Endothelial cell of umbilical vein (primary cell): ENCODE measurements at regions of chr3 and their contacts with region 1.

Region 1: DNA sequence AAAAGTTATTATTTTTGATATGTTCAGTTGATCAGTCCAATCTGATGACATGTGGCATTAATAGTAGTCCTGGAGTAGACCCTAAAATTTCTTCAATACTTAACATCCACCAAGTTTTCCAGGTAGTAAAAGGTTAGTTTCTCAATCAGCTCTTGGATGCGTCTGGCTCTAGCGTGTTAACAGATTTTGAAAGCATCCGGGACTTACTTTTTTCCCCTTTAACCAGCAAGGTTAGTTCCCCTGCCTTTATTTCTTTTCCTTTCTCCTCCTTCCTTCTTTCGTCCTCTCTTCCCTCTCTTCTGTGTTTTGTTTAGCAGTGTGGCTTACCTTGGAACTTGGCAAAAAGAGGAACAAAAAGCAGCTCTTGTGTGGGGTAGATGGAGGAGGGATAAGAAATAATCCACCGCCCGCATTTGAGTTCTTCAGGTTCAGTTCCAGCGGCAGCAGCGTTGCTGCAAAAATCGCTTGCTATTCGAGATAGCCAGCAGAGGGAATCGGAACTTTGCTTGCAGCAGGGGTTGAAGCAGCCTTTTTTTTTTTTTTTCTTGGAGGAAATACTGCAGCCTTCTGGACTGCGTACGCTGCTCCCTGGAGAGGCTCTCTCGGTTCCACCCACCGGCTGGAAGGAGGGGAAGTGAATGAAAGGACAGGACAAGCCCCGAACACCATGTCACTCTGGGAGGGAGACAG is at the start of gene RBMS3:
- DNase-seq: peak; percentile 95
- H3K4me3 ChIP-seq: peak within 1 kb of the TSS; percentile 58 to 94 (median 77)
- H3K27ac ChIP-seq: peak within 1 kb of the TSS; percentile 97
- H3K4me1 ChIP-seq: peaks cover 31% of the 10 kb centered on the region
- H3K27me3 ChIP-seq: no peaks in the 10 kb centered on the region
- CTCF ChIP-seq: peak; percentile 35 to 66
- POLR2A ChIP-seq: no peak
- total RNA-seq, gene RBMS3: 37.3 and 42.3 TPM in 2 replicates

Region 2: DNA sequence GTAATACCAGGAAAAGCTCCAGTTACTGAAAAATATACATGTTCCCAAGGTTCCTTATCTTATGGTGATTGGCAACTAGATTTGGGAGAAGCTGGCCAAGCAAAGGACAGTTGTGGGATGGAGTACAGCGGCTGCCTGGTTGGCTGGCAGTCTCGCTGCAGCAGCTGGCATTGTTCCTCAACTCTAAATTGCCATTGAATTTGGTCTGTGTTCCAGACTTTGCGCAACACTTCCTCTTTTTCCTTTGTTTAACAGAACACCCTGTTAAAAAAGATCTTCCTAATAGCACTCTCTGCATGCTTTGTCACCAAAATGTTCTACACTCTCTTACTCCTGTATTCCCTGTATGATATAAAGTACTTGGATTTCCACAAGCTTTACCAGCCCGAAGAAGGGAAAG is 420.2 kb before region 1 on chr3:
- CTCF ChIA-PET with region 1: no interaction called
- POLR2A ChIA-PET with region 1: no interaction called
- dilution Hi-C with region 1: no loop called
- intact Hi-C with region 1: no loop called
- DNase-seq: no peak
- H3K4me3 ChIP-seq: no peak overlapping the region
- H3K27ac ChIP-seq: no peak overlapping the region
- H3K4me1 ChIP-seq: no peaks in the 10 kb centered on the region
- H3K27me3 ChIP-seq: peaks cover 0 to 4% of the 10 kb centered on the region in 2 experiments
- CTCF ChIP-seq: no peak
- POLR2A ChIP-seq: no peak

Region 3: GRCh38 chr3:29128001-29128400 is 152.5 kb before region 1 on chr3:
- CTCF ChIA-PET with region 1: interaction called, 6 read pairs
- POLR2A ChIA-PET with region 1: no interaction called
- dilution Hi-C with region 1: no loop called
- intact Hi-C with region 1: loop called (anchors 1 kb)
- DNase-seq: peak; percentile 90
- H3K4me3 ChIP-seq: no peak overlapping the region
- H3K27ac ChIP-seq: peak overlapping the region; percentile 47
- H3K4me1 ChIP-seq: peaks cover 15% of the 10 kb centered on the region
- H3K27me3 ChIP-seq: no peaks in the 10 kb centered on the region
- CTCF ChIP-seq: no peak
- POLR2A ChIP-seq: no peak

Region 4: GRCh38 chr3:29202378-29202777 is 78.2 kb before region 1 on chr3:
- CTCF ChIA-PET with region 1: no interaction called
- POLR2A ChIA-PET with region 1: no interaction called
- dilution Hi-C with region 1: no loop called
- intact Hi-C with region 1: loop called (anchors 5 kb)
- DNase-seq: peak; percentile 59
- H3K4me3 ChIP-seq: no peak overlapping the region
- H3K27ac ChIP-seq: peak overlapping the region; percentile 37
- H3K4me1 ChIP-seq: peaks cover 17% of the 10 kb centered on the region
- H3K27me3 ChIP-seq: no peaks in the 10 kb centered on the region
- CTCF ChIP-seq: no peak
- POLR2A ChIP-seq: no peak

Region 5: DNA sequence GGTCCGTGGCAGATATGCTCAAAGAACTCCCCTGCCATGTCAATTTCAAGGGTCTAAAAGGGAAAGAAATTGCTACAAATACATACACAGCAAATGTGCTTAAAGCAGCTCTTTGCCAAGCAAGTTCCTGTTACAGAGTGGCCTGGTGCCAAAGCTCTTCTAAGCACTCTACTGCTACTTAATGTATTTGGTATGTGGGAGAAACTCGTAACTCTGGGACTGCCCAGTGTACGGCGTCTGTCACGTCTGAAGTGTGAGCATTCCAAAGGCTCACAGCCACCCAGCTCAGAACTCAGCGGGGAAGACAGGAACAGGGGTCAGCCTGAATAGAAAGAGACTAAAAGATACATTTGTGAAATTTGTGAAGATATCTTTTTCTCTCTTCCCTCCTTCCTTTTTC is 54.9 kb after region 1 on chr3:
- CTCF ChIA-PET with region 1: interaction called, 9 read pairs
- POLR2A ChIA-PET with region 1: no interaction called
- dilution Hi-C with region 1: no loop called
- intact Hi-C with region 1: loop called (anchors 1 kb)
- DNase-seq: peak; percentile 92
- H3K4me3 ChIP-seq: peak overlapping the region in 2 of 3 experiments; percentile 19 to 42
- H3K27ac ChIP-seq: peak overlapping the region; percentile 76
- H3K4me1 ChIP-seq: peaks cover 40% of the 10 kb centered on the region
- H3K27me3 ChIP-seq: no peaks in the 10 kb centered on the region
- CTCF ChIP-seq: no peak
- POLR2A ChIP-seq: no peak

Region 6: DNA sequence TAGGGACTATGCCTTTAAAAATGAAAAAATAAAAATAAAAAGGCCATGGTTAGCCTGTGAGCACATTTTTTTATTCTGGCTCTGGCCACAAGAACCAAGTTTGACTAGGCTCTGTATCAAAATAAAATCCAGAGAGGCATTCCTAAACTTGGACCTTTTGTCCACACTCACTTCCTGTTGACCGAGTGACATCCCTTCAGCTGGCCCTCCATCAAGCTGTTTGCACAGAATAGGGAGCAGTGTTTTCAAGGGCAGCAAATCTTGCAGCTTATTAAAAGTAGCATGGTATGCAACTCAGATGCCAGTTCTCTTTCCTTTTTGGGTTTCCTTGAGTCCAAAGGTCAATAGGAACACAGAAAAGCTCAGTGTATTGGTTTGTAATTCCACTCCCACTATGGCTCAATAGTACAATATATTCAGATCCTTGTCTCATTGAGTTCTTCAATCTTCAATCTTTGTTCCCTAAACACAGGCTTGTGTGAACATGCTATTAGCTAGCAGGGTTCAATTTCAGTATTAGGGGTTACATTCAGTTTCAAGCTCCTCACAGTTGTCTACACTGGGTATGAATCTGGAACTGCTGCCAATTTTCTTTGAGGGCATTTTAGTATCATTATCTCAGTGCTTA is 244.8 kb after region 1 on chr3:
- CTCF ChIA-PET with region 1: no interaction called
- POLR2A ChIA-PET with region 1: interaction called, 5 read pairs
- dilution Hi-C with region 1: no loop called
- intact Hi-C with region 1: loop called (anchors 1 kb)
- DNase-seq: peak; percentile 93
- H3K4me3 ChIP-seq: no peak overlapping the region
- H3K27ac ChIP-seq: peak overlapping the region; percentile 64
- H3K4me1 ChIP-seq: peaks cover 25% of the 10 kb centered on the region
- H3K27me3 ChIP-seq: no peaks in the 10 kb centered on the region
- CTCF ChIP-seq: no peak
- POLR2A ChIP-seq: peak; percentile 48

Region 7: DNA sequence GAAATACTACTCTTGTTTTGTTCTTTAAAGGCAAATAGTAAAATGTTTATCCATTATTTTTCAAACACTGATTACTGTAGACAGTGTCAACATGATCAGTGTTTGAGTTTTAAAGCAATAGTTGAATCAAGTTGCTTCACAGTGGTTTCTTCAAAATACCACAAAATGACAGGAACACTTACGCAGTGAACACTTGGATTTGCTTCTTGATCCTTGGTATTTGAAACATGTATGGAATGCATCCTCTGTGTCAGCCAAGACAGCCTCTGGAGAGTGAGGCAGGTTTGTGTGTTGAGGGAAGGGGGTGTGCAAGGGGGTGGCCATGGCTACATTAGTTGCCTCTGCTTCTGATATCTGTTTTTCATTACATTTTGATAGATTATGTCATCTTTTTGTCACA is 413.3 kb after region 1 on chr3:
- CTCF ChIA-PET with region 1: interaction called, 3 read pairs
- POLR2A ChIA-PET with region 1: no interaction called
- dilution Hi-C with region 1: no loop called
- intact Hi-C with region 1: loop called (anchors 1 kb)
- DNase-seq: peak; percentile 78
- H3K4me3 ChIP-seq: no peak overlapping the region
- H3K27ac ChIP-seq: peak overlapping the region; percentile 98
- H3K4me1 ChIP-seq: peaks cover 34% of the 10 kb centered on the region
- H3K27me3 ChIP-seq: no peaks in the 10 kb centered on the region
- CTCF ChIP-seq: no peak
- POLR2A ChIP-seq: no peak

Region 8: DNA sequence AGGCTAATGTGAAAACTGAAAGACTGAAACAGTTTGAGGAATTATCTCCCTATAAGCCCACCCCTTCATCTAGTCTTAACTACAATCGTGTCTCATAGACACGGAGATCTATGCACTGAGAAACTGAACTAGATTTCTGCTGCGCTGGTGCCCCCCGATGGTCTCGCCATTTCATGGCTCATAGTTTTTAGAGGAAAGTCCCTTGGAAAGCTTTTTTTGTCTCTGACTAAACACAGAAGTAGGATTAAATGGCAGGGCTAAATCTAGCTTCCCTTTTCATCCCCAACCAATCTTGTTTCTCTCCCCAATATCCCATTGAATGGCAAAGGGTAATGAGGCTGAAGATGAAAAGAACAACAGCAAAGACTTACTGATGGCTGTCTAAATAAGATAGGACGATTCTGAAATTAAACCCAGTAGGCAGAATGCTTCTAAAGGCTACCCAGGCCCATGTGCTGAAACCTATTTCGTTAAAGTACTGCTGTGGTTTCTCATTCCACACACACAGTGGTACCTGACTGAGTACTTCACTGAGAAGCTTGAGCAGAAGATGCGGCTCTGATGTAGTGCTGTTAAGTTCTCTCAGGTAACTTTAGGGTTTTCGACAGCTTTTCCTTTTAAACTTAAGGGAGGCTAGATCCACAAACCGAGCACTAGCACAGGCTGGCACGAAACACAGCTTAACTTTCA is 1471.2 kb after region 1 on chr3:
- CTCF ChIA-PET with region 1: no interaction called
- POLR2A ChIA-PET with region 1: no interaction called
- dilution Hi-C with region 1: no loop called
- intact Hi-C with region 1: loop called (anchors 10 kb)
- DNase-seq: peak; percentile 78
- H3K4me3 ChIP-seq: no peak overlapping the region
- H3K27ac ChIP-seq: no peak overlapping the region
- H3K4me1 ChIP-seq: peaks cover 21% of the 10 kb centered on the region
- H3K27me3 ChIP-seq: no peaks in the 10 kb centered on the region
- CTCF ChIP-seq: peak; percentile 49 to 65
- POLR2A ChIP-seq: no peak